ENCODE measurements at regions of chr12 and their contacts with region 1.

Region 1: GRCh38 chr12:30945443-30946164 is 19.1 kb downstream of the TSPAN11 start:
- DNase-seq: no peak
- H3K4me3 ChIP-seq: no peak overlapping the region
- H3K27ac ChIP-seq: no peak overlapping the region
- H3K4me1 ChIP-seq: no peaks in the 10 kb centered on the region
- H3K27me3 ChIP-seq: no peaks in the 10 kb centered on the region
- CTCF ChIP-seq: no peak
- EP300 ChIP-seq: no peak
- POLR2A ChIP-seq: no peak
- RAD21 ChIP-seq: no peak

Region 2: GRCh38 chr12:30862486-30862885 is 83.1 kb before region 1 on chr12:
- CTCF ChIA-PET with region 1: no interaction called
- POLR2A ChIA-PET with region 1: no interaction called
- DNase-seq: no peak
- H3K4me3 ChIP-seq: no peak overlapping the region
- H3K27ac ChIP-seq: no peak overlapping the region
- H3K4me1 ChIP-seq: peaks cover 0 to 4% (median under 1%) of the 10 kb centered on the region in 4 experiments; a peak in 1 of 7 replicates
- H3K27me3 ChIP-seq: no peaks in the 10 kb centered on the region; a peak in 1 of 7 replicates
- CTCF ChIP-seq: no peak
- EP300 ChIP-seq: no peak
- POLR2A ChIP-seq: no peak
- RAD21 ChIP-seq: no peak

Region 3: GRCh38 chr12:30926243-30927221 is 19.1 kb before region 1 on chr12 and contains the start of gene TSPAN11:
- CTCF ChIA-PET with region 1: interaction called, 12 read pairs
- POLR2A ChIA-PET with region 1: interaction called, 7 read pairs
- DNase-seq: peak; percentile 27 to 79
- H3K4me3 ChIP-seq: peak within 1 kb of the TSS; percentile 27 to 70 (median 48)
- H3K27ac ChIP-seq: no peak within 1 kb of the TSS
- H3K4me1 ChIP-seq: peaks cover 4 to 12% (median 6%) of the 10 kb centered on the region in 4 experiments
- H3K27me3 ChIP-seq: peaks cover 0 to 37% (median 28%) of the 10 kb centered on the region in 4 experiments; a peak in 6 of 7 replicates
- CTCF ChIP-seq: no peak
- EP300 ChIP-seq: no peak; a peak in 1 of 3 replicates
- POLR2A ChIP-seq: peak in 1 of 2 experiments; percentile 39; a peak in 2 of 3 replicates
- RAD21 ChIP-seq: peak in 1 of 2 experiments; percentile 8; a peak in 1 of 4 replicates
- total RNA-seq, gene TSPAN11: 3.9 and 4.0 TPM in 2 replicates

Measured in H1 (cell line).